Right ventricle myocardium inferior (tissue), 1 donor: ENCODE measurements at regions of chr9 and their contacts with region 1.

Region 1: GRCh38 chr9:84823421-84824271 is 154.1 kb downstream of the NTRK2 start:
- DNase-seq: no peak
- ATAC-seq: peak; percentile 87

Region 2: DNA sequence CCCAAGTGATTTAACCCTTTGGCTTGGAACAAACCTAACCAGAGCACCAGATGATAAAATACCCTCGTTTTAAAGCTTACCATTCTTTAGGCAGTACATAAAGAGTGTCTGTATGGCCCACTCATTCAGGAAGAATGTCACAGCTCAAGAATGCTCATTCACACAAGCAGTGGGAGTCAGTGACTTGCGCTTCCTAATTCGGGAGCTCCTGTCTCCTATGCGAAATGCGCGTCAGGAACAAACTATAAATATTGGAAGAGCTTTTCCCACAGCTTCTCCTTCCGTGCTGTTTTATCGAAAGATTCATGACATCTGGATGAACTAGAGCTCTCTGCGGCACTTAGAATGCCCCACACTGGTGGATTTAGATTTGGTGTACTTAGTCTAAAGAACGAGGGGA is 87.6 kb before region 1 on chr9:
- intact Hi-C with region 1: no loop called
- DNase-seq: no peak
- ATAC-seq: no peak

Region 3: DNA sequence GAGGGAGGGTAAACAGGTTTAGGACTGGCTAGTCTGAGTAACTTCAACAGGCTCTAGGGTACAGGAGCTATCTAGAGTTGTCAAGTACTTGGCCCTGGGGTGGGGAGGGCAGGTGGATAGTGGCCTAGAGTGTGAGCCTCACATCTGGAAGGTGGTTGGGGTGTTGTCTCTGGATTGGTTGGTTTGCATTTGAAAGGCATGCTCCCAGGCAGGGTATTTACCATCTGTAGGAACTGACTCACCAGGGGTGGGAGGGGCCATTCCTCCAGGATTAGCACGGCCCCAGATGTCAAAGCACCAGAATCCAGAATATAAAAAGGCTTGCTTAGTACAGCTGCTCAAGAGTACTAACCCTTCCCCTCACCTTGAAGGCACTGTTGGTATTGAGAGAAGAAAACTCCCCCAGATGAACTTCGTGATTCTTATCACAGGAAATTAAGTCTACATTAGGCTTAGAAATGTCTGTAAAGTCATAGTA is 39.2 kb after region 1 on chr9:
- intact Hi-C with region 1: loop called (anchors 5 kb)
- DNase-seq: no peak
- ATAC-seq: no peak